Colonic mucosa (tissue), 4 donors: ENCODE measurements at regions of chr10 and their contacts with region 1.

Region 1: DNA sequence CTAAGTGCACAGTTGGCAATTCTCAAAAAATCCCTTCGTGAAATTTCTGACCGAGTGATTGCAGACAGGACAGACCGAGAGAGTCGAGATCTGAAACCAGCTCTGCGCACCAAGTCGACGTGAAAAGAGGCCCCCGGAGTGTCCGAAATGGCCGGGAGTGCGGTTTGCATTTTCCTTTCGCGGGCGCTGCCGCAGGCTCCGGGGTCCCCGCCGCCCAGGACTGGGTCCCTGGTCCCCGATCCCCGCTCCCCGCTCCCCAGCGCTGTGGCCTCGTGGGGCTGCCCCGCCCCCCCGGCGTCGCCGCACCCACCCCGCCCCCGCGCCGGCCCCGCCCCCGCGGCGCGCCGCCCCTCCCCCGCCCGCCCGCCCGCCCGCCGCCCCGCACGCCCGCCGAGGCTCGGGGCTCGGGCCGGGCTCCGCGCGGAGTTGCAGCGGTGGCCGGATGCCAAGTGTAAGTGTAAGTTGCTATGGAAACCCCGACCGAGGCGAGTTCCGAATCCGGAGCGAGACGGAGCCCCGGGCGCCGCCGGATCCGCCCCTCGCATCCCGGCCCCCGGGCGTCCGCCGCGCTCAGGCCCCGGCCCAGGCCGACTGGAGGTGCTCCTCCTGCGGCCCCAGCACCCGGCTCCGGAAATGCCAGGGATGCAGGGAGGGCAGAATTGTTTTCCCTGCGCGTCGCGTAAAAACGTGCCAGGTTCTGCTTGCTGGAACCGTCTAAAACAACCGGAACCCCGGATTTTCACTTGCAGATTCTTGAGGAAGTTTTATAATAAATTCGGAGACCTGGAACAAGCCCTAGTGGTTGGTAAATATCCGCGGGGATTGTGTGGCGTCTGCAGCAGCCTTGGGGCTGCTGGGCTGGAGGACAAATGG is 4.6 kb downstream of the BMI1 start:
- DNase-seq: peak; percentile 66
- H3K4me3 ChIP-seq: peak overlapping the region; percentile 49
- H3K27ac ChIP-seq: peak overlapping the region; percentile 26
- H3K4me1 ChIP-seq: no peaks in the 10 kb centered on the region
- H3K27me3 ChIP-seq: peaks cover 10% of the 10 kb centered on the region
- CTCF ChIP-seq: no peak

Region 2: GRCh38 chr10:21525367-21526183 is 799.9 kb before region 1 on chr10 and contains the start of gene SKIDA1:
- intact Hi-C with region 1: loop called (anchors 10 kb)
- DNase-seq: peak; percentile 91
- H3K4me3 ChIP-seq: peak within 1 kb of the TSS; percentile 62
- H3K27ac ChIP-seq: peak within 1 kb of the TSS; percentile 88
- H3K4me1 ChIP-seq: no peaks in the 10 kb centered on the region
- H3K27me3 ChIP-seq: peaks cover 5% of the 10 kb centered on the region
- CTCF ChIP-seq: no peak
- total RNA-seq, gene SKIDA1: 0.10 to 0.45 TPM

Region 3: DNA sequence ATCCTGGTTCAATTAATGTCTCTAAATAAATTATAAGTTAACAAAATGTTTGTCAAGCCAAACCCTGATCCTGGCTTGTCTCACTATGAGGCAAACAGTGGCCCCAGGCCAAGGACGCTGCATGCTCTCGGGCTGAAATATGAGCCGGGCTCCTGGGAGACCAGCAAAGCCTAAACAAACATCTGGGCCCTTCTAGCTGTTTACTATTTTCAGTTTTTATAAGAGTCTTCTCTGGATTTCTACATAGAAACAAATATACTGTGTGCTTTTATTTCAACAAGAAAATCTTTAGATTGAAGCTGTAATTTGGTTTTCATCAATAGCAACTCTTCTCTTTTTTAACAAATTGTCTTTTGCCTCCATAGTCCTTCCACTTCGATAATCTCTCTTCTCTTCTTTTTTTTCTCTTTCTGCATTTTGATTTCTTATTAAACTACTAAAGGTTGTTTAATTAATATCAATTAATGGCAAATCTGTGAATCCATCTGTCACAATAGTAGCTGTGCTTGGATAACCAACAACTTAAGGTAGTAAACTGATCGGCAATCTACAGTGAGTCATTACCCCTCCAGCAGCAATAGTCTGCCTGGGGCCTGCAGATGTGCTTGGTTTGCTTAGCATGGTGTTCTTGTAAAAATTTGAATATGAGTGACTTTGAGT is 238.6 kb before region 1 on chr10:
- intact Hi-C with region 1: no loop called
- DNase-seq: peak; percentile 65
- H3K4me3 ChIP-seq: no peak overlapping the region
- H3K27ac ChIP-seq: no peak overlapping the region
- H3K4me1 ChIP-seq: no peaks in the 10 kb centered on the region
- H3K27me3 ChIP-seq: no peaks in the 10 kb centered on the region
- CTCF ChIP-seq: no peak

Region 4: DNA sequence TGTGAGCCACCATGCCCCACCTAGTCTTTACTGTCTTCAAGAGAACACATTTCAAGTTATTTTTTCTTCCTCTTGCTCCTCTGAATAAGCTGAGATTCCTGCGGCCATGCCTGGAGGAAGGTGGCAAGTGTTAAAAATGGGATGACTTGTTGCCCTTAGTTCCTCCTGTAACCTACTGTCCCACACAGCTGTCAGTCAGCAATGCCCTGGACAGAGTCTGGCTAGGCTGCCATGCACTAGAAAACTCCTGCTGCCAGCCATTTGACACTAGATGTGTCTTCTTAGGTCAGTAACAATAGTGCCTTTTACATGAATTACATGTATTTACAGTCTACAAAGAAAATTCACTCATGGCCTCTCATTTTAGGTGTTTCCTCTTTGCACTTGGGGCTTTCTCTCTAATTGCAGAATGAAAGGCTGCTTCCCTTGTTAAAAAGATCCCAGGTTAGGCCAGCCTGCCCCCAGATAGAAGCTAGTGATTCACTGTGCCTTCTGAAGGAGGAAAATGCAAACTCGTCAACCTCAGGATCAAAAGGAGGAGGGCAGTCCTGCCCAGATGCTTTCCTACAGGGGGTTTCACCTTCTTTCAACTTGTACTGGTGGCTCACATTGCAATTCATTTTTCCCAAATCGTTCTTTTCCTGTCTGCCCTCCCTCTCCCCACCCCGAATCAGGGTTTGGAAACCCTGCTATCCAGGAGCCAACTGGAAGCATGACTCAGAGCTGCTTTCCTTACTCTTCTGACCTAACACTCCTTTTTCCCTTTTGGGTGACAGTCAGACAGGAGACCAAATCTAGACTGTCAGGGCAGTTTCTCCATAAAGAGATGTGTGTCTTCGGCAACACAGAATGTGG is 156.4 kb after region 1 on chr10:
- intact Hi-C with region 1: no loop called
- DNase-seq: no peak
- H3K4me3 ChIP-seq: no peak overlapping the region
- H3K27ac ChIP-seq: no peak overlapping the region
- H3K4me1 ChIP-seq: no peaks in the 10 kb centered on the region
- H3K27me3 ChIP-seq: peaks cover 14% of the 10 kb centered on the region
- CTCF ChIP-seq: no peak